Mammary epithelial cell (primary cell): ENCODE measurements at regions of chr15 and their contacts with region 1.

Region 1: GRCh38 chr15:67175643-67176071 is 78.8 kb downstream of the AAGAB start:
- DNase-seq: no peak
- H3K4me3 ChIP-seq: no peak overlapping the region
- H3K27ac ChIP-seq: peak overlapping the region; percentile 79
- H3K4me1 ChIP-seq: peaks cover 55% of the 10 kb centered on the region
- H3K27me3 ChIP-seq: no peaks in the 10 kb centered on the region
- CTCF ChIP-seq: no peak

Region 2: GRCh38 chr15:66946578-66947164 is 229.0 kb before region 1 on chr15:
- CTCF ChIA-PET with region 1: no interaction called
- dilution Hi-C with region 1: no loop called
- in situ Hi-C with region 1: no loop called
- intact Hi-C with region 1: loop called (anchors 2 kb)
- DNase-seq: peak; percentile 55
- H3K4me3 ChIP-seq: no peak overlapping the region
- H3K27ac ChIP-seq: no peak overlapping the region
- H3K4me1 ChIP-seq: no peaks in the 10 kb centered on the region
- H3K27me3 ChIP-seq: no peaks in the 10 kb centered on the region
- CTCF ChIP-seq: peak; percentile 85 to 94

Region 3: DNA sequence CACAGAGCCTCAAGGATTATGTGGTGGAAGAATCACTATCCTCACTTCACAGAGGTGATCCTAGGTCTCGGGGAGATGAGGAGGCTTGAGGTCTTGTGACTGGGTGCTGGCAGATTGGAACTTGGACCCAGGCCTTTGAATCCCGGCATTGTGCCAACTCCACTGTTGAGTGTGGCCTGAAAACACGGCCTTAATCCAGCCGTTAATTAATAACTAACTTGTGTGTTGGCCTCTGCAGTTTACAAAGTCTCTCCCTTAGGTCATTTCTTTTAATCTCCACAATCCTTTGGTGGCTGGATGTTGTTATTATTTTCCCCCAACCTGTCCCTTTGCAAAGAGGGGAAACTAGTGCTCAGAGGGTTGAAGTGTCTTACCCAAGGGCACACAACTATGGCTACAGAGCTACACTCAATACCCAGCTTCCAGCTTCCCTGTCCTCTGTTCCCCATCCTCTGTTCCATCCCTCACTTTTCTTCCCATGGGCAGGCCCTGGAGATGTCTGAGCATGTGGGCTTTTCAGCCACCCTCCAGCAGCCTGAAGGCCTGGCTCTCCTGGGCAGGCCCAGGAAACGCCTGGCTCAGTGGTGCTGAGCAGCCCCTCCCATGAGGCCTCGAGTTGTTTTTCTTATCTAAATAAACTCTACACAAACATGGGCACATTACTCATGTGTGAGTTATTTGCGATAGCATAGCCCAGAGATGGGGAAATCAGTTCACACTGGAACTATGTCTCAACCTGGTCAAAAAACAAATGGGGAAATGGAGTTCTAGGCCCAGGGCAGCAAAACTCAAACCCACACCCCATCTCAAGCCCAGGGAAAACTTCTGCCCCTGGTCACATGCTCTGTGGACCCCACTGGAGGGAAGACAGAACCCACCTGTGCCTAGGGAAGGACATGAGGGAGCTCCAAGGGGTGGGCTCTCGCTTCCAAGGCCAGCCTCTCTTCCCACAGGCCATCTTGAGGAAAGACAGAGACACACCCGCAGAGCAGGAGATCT is 127.1 kb before region 1 on chr15:
- CTCF ChIA-PET with region 1: no interaction called
- dilution Hi-C with region 1: no loop called
- in situ Hi-C with region 1: no loop called
- intact Hi-C with region 1: loop called (anchors 5 kb)
- DNase-seq: peak; percentile 86
- H3K4me3 ChIP-seq: no peak overlapping the region
- H3K27ac ChIP-seq: peak overlapping the region; percentile 89
- H3K4me1 ChIP-seq: peaks cover 44% of the 10 kb centered on the region
- H3K27me3 ChIP-seq: no peaks in the 10 kb centered on the region
- CTCF ChIP-seq: no peak

Region 4: GRCh38 chr15:67065444-67066093 is 110.1 kb before region 1 on chr15 and contains the start of gene SMAD3:
- CTCF ChIA-PET with region 1: no interaction called
- dilution Hi-C with region 1: no loop called
- in situ Hi-C with region 1: no loop called
- intact Hi-C with region 1: loop called (anchors 1 kb)
- DNase-seq: peak; percentile 93
- H3K4me3 ChIP-seq: peak within 1 kb of the TSS; percentile 81 to 96 (median 91)
- H3K27ac ChIP-seq: peak within 1 kb of the TSS; percentile 81
- H3K4me1 ChIP-seq: peaks cover 38% of the 10 kb centered on the region
- H3K27me3 ChIP-seq: no peaks in the 10 kb centered on the region
- CTCF ChIP-seq: no peak
- total RNA-seq, gene SMAD3: 8.7 to 41.0 TPM

Region 5: GRCh38 chr15:67091071-67091979 is 84.3 kb before region 1 on chr15:
- CTCF ChIA-PET with region 1: no interaction called
- dilution Hi-C with region 1: loop called (anchors 5 kb)
- in situ Hi-C with region 1: no loop called
- intact Hi-C with region 1: loop called (anchors 5 kb)
- DNase-seq: peak; percentile 99
- H3K4me3 ChIP-seq: no peak overlapping the region
- H3K27ac ChIP-seq: peak overlapping the region; percentile 94
- H3K4me1 ChIP-seq: peaks cover 41% of the 10 kb centered on the region
- H3K27me3 ChIP-seq: no peaks in the 10 kb centered on the region
- CTCF ChIP-seq: no peak

Region 6: GRCh38 chr15:67125589-67126502 is 49.8 kb before region 1 on chr15:
- CTCF ChIA-PET with region 1: no interaction called
- dilution Hi-C with region 1: no loop called
- in situ Hi-C with region 1: no loop called
- intact Hi-C with region 1: loop called (anchors 1 kb)
- DNase-seq: peak; percentile 93
- H3K4me3 ChIP-seq: peak overlapping the region in 1 of 3 experiments; percentile 4
- H3K27ac ChIP-seq: peak overlapping the region; percentile 92
- H3K4me1 ChIP-seq: peaks cover 73% of the 10 kb centered on the region
- H3K27me3 ChIP-seq: no peaks in the 10 kb centered on the region
- CTCF ChIP-seq: no peak

Region 7: GRCh38 chr15:67150028-67150860 is 25.4 kb before region 1 on chr15:
- CTCF ChIA-PET with region 1: no interaction called
- dilution Hi-C with region 1: no loop called
- in situ Hi-C with region 1: no loop called
- intact Hi-C with region 1: loop called (anchors 1 kb)
- DNase-seq: peak; percentile 97
- H3K4me3 ChIP-seq: peak overlapping the region in 2 of 3 experiments; percentile 0 to 23
- H3K27ac ChIP-seq: peak overlapping the region; percentile 92
- H3K4me1 ChIP-seq: peaks cover 51% of the 10 kb centered on the region
- H3K27me3 ChIP-seq: no peaks in the 10 kb centered on the region
- CTCF ChIP-seq: no peak